Gastrocnemius medialis (tissue), 4 donors: ENCODE measurements at regions of chr20 and their contacts with region 1.

Region 1: GRCh38 chr20:52972190-52972937 is at the start of gene TSHZ2:
- DNase-seq: peak; percentile 4 to 40
- ATAC-seq: peak; percentile 12 to 51
- H3K4me3 ChIP-seq: peak within 1 kb of the TSS; percentile 53 to 59 (median 56)
- H3K27ac ChIP-seq: peak within 1 kb of the TSS; percentile 22 to 61 (median 54)
- H3K4me1 ChIP-seq: no peaks in the 10 kb centered on the region
- H3K27me3 ChIP-seq: peaks cover 0 to 6% (median 0%) of the 10 kb centered on the region in 3 donors
- CTCF ChIP-seq: no peak
- POLR2A ChIP-seq: no peak
- total RNA-seq, gene TSHZ2: 1.0 to 3.5 (median 2.8) TPM

Region 2: DNA sequence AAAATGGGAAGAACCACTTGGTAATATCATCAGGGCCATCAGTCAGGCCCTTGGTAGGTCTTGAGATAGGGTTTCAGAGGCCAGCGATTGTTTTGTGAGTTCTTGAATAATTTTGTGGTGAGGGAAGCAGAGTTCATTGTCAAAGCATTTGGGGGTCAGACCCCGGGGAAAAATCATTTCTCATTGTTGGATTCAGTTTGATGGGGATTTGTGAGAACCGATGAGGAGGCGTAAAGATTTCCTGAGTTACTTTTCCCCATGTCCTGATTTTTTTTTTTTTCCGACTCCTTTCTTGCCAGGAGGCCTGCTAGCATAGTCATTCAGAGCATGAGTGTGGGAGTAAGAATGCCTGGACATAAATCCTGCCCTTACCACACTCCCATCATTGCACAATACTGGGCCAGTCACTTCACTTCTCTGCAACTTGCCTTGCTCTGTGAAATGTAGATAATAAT is 60.1 kb after region 1 on chr20:
- in situ Hi-C with region 1: no loop called
- intact Hi-C with region 1: loop called (anchors 10 kb)
- DNase-seq: peak; percentile 18 to 48
- ATAC-seq: peak; percentile 78 to 89
- H3K4me3 ChIP-seq: no peak overlapping the region
- H3K27ac ChIP-seq: peak overlapping the region in 3 of 4 donors; percentile 11 to 44 (median 21)
- H3K4me1 ChIP-seq: no peaks in the 10 kb centered on the region
- H3K27me3 ChIP-seq: no peaks in the 10 kb centered on the region
- CTCF ChIP-seq: no peak
- POLR2A ChIP-seq: no peak

Region 3: GRCh38 chr20:53149148-53149889 is 177.0 kb after region 1 on chr20:
- in situ Hi-C with region 1: no loop called
- intact Hi-C with region 1: no loop called
- DNase-seq: no peak
- ATAC-seq: no peak
- H3K4me3 ChIP-seq: no peak overlapping the region
- H3K27ac ChIP-seq: no peak overlapping the region
- H3K4me1 ChIP-seq: peaks cover 6 to 7% of the 10 kb centered on the region in 2 donors
- H3K27me3 ChIP-seq: no peaks in the 10 kb centered on the region
- CTCF ChIP-seq: no peak
- POLR2A ChIP-seq: no peak